Panc1 (cell line): ENCODE measurements at regions of chr9 and their contacts with region 1.

Region 1: GRCh38 chr9:137295238-137295811 is 6.7 kb downstream of the NRARP start:
- DNase-seq: no peak
- ATAC-seq: peak; percentile 51
- H3K4me3 ChIP-seq: peak overlapping the region in 1 of 2 experiments; percentile 36; a peak in 3 of 4 replicates
- H3K27ac ChIP-seq: no peak overlapping the region
- H3K4me1 ChIP-seq: peaks cover 30% of the 10 kb centered on the region
- H3K27me3 ChIP-seq: no peaks in the 10 kb centered on the region
- CTCF ChIP-seq: peak; percentile 93

Region 2: DNA sequence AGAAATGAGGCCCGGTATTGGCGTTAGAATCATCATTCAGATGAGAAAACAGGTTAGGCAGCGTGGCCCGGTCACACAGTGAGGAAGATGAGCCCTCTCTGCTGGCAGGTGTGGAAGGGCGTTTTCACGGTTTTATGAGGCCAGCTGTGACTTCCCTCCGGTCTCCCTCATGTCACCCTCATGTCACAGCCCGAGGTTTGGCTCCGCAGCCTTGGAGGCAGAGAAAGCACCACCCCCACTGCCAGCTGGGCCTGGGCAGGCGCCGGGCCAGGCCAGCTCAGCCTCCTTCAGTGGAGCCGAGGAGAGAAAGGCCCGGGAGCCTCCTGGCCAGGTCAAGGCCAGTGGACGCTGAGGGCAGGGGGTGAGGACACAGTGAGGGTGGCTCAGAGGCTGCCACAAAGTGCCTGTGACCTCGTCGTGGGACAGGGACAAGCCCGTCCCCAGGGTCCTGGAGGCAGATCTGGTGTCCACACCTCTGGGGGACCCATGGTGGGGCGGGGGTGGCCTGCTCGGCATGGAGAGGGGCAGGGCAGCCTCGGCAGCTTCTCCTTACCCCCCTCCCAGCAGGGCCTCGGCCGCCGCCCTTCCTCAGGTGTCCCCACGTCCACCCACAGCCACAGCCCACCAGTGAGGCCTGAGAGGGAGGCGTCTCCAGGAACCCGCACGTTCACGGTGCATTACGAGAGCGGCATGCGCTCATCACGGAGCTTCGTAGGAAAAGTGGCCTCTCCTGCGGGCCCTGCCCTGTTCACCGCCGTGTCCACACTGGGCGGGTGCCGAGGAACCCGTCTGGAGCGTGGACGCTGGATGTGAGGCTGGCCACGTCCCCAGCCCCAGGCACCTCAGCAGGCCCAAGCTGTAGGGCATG is 95.5 kb after region 1 on chr9:
- CTCF ChIA-PET with region 1: no interaction called
- POLR2A ChIA-PET with region 1: interaction called, 11 read pairs
- in situ Hi-C with region 1: no loop called
- intact Hi-C with region 1: no loop called
- DNase-seq: no peak
- ATAC-seq: peak; percentile 25; the same call in 1 of the 2 replicates
- H3K4me3 ChIP-seq: no peak overlapping the region
- H3K27ac ChIP-seq: no peak overlapping the region
- H3K4me1 ChIP-seq: no peaks in the 10 kb centered on the region
- H3K27me3 ChIP-seq: no peaks in the 10 kb centered on the region
- CTCF ChIP-seq: no peak

Region 3: GRCh38 chr9:137423004-137423874 is 127.9 kb after region 1 on chr9 and contains the starts of genes EXD3 and NOXA1:
- CTCF ChIA-PET with region 1: no interaction called
- POLR2A ChIA-PET with region 1: no interaction called
- in situ Hi-C with region 1: no loop called
- intact Hi-C with region 1: loop called (anchors 10 kb)
- DNase-seq: peak; percentile 27
- ATAC-seq: peak; percentile 93
- H3K4me3 ChIP-seq: peak within 1 kb of the TSS; percentile 75 to 79
- H3K27ac ChIP-seq: peak within 1 kb of the TSS; percentile 86
- H3K4me1 ChIP-seq: peaks cover 6% of the 10 kb centered on the region
- H3K27me3 ChIP-seq: no peaks in the 10 kb centered on the region
- CTCF ChIP-seq: peak; percentile 95
- total RNA-seq, gene EXD3: 9.2 TPM
- total RNA-seq, gene NOXA1: 3.7 TPM